ENCODE measurements at regions of chr2 and their contacts with region 1.

Region 1: DNA sequence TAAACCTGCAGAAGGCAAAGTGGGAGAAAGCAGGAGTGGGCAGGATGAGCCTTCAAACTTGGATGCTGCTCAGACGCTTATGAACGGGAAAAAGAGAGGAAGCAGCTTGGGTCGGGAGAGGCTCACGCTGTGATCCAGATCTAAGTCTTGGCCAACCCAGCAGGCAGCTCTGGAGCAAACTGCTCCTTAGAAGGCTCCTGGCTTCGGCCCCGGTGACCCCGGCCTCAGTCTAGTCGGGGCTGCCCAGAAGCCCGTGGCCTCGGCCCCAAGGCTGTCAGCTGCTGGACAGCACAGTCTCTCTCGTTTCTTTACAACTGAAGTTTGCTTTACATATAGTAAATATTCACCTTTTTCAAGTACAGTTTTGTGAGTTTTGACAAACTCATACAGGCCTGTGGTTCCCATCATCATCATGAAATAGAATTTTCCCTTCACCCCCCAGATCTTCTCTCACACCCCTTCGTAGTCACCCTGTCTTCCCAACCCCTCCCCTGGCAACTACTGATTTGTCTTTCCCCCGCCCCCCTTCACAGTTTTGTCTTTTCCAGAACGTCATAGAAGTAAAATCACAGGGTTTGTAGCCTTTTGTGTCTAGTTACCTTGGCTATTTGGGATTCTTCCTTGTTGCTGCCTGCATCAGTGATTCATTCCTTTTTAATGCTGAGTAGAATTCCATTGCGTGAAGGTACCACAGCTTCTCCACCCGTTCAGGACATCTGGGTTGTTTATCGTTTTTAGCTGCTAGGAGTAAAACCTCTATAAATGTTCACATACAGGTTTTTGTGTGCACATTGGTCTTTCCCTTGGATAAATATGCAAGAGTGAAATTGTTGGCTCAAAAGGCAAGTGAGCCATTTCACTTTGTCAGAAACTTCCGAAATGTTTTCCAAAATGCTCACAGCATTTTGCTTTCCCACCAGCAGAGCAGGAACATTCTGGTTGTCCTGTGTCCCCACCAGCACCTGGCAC is 35.1 kb downstream of the MYO7B start:
- DNase-seq: peak; percentile 49 to 60
- H3K4me3 ChIP-seq: no peak overlapping the region
- H3K27ac ChIP-seq: no peak overlapping the region
- H3K4me1 ChIP-seq: peaks cover 13% of the 10 kb centered on the region
- H3K27me3 ChIP-seq: no peaks in the 10 kb centered on the region
- CTCF ChIP-seq: no peak
- POLR2A ChIP-seq: no peak

Region 2: DNA sequence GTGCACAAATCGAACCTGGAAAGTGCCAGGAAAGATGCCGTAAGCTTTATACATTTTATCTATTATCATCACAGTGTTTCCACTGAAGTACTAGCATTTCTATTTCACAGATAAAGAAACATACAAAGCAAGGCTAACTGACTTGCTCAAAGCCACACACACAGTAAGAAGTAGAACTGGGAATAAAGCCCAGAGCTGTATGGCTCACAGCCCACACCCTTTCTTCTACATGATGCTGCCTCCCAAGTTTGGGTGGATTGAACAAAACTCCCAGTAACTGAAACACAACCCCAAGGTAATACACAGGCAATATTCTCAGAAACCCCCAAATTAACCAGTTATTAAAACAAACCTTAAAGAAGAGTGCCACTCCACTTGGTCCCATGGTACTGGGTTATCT is 446.1 kb after region 1 on chr2:
- intact Hi-C with region 1: no loop called
- DNase-seq: no peak
- H3K4me3 ChIP-seq: no peak overlapping the region
- H3K27ac ChIP-seq: no peak overlapping the region
- H3K4me1 ChIP-seq: no peaks in the 10 kb centered on the region
- H3K27me3 ChIP-seq: no peaks in the 10 kb centered on the region
- CTCF ChIP-seq: no peak
- POLR2A ChIP-seq: no peak

Region 3: DNA sequence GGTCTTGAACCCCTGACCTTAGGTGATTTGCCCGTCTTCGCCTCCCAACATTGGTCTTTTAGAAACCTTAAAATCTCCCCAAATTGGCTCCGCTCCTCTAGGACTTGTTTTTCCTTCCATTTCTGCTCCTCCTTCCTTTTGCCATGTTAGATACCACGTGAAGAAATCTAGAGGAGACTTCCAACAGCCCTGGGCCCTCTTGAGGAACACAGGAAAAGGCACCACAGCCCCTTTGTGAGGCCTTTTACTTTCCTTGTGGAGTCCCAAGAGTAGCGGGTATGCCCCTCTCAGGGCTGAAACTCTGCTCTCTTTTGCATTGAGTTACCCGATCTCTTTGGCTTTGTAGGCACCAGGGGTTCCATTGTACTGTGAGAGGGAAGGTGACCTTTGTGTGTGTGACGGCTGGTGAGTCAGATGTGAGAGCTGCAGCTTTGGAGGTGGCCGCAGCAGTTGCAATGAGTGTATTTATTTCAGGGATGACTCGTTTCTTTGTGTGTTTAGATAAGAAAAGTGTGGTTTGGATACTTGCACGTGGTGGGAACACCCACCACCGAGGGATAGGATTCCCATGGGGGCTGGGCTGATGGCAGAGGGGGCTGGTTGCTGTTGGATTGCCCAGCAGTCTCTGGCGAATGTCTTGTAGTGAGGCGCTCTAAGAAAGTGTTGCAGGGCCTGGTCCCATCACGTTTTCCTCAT is 966.5 kb after region 1 on chr2:
- intact Hi-C with region 1: loop called (anchors 5 kb)
- DNase-seq: no peak
- H3K4me3 ChIP-seq: no peak overlapping the region
- H3K27ac ChIP-seq: no peak overlapping the region
- H3K4me1 ChIP-seq: no peaks in the 10 kb centered on the region
- H3K27me3 ChIP-seq: no peaks in the 10 kb centered on the region
- CTCF ChIP-seq: no peak
- POLR2A ChIP-seq: no peak

Measured in vagina (tissue), 2 donors.